Naive thymus-derived CD4-positive, alpha-beta T cell (primary cell): ENCODE measurements at regions of chr11 and their contacts with region 1.

Region 1: GRCh38 chr11:35073691-35074419 is 65.1 kb upstream of the CD44 start:
- DNase-seq: no peak
- ATAC-seq: no peak
- H3K4me3 ChIP-seq: no peak overlapping the region
- H3K4me3 Mint-ChIP-seq: no peak overlapping the region
- H3K27ac ChIP-seq: no peak overlapping the region
- H3K27ac Mint-ChIP-seq: peak overlapping the region in 7 of 9 donors; percentile 48 to 82 (median 65)
- H3K4me1 ChIP-seq: peaks cover 33 to 44% of the 10 kb centered on the region in 2 donors
- H3K4me1 Mint-ChIP-seq: peaks cover 40 to 82% (median 66%) of the 10 kb centered on the region in 7 donors
- H3K27me3 ChIP-seq: no peaks in the 10 kb centered on the region
- H3K27me3 Mint-ChIP-seq: no peaks in the 10 kb centered on the region

Region 2: DNA sequence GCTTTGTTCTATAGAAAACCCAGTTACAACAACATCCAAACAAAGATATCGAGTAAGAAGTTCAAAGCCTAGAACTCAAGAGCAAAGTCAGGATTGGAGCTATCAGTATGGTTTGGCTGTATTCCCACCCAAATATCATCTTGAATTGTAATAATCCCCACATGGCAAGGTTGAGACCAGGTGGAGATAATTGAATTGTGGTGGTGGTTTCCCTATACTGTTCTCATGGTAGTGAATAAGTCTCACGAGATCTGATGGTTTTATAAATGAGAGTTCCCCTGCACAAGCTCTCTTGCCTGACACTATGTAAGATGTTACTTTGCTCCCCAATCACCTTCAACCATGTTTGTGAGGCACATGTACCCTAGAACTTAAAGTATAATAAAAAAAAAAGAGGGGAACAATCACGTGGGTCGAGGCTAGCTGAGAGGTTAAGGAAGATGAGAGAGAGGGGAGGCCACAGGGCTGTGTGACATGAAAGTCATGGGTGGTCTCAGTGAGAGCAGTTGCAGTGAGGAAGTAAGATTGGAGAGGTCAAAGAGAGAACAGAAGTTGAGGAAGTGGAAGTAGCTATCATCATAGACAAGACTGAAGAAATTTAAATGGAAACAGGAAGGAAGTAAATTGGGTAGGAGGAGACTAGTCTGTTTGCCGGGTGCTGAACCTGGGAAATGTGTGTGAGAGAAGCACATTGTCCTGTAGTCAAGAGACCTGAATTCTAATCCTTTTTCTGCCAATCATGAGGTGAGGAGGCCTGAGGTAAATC is 15.0 kb before region 1 on chr11:
- CTCF ChIA-PET with region 1: interaction called, 3 read pairs
- POLR2A ChIA-PET with region 1: interaction called, 11 read pairs
- intact Hi-C with region 1: loop called in 1 of 2 experiments (anchors 2 kb)
- DNase-seq: peak in 2 of 9 donors; percentile 20
- ATAC-seq: peak; percentile 69
- H3K4me3 ChIP-seq: no peak overlapping the region
- H3K4me3 Mint-ChIP-seq: peak overlapping the region; percentile 2 to 75 (median 48)
- H3K27ac ChIP-seq: peak overlapping the region; percentile 41
- H3K27ac Mint-ChIP-seq: peak overlapping the region in 8 of 9 donors; percentile 44 to 93 (median 80)
- H3K4me1 ChIP-seq: peaks cover 19 to 24% of the 10 kb centered on the region in 2 donors
- H3K4me1 Mint-ChIP-seq: peaks cover 27 to 56% (median 44%) of the 10 kb centered on the region in 7 donors
- H3K27me3 ChIP-seq: no peaks in the 10 kb centered on the region
- H3K27me3 Mint-ChIP-seq: no peaks in the 10 kb centered on the region

Region 3: DNA sequence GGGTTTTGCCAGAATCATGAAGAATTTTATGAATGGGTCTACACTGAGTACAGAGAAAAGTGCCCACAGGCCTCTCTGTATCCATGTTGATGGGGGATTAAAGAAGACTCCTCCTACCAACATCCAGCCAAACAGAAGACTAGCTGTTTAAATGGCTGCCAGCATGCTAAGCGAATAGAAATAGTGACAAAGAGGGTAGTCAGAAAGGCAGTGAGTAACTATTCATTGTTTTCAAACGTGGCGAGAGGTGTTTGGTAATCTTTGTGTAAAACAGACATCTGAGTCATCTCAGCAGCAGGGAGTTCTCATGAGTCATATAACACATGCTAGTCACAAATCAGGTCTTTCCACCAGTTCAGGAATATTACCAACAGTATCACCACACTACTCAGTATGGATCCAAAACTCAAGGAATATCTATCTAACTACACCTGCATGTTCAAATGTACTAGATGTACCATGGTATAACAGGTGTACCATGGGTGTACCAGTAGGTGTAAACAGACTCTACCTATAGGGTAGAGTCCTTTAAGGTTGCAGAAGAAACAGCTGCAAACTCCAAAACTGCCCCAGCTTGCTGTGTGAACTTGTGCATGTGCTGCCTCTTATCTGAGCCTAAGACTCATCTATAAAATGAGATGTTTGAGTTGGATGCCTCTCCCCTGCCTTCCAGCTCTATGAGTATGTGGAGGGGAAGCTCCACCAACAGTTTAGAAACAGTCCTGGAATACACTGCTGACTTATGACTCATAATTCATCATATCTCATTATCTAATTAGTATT is 263.5 kb after region 1 on chr11:
- CTCF ChIA-PET with region 1: no interaction called
- POLR2A ChIA-PET with region 1: no interaction called
- intact Hi-C with region 1: no loop called
- DNase-seq: no peak
- ATAC-seq: peak; percentile 70
- H3K4me3 ChIP-seq: no peak overlapping the region
- H3K4me3 Mint-ChIP-seq: no peak overlapping the region
- H3K27ac ChIP-seq: no peak overlapping the region
- H3K27ac Mint-ChIP-seq: no peak overlapping the region
- H3K4me1 ChIP-seq: peaks cover 6 to 14% of the 10 kb centered on the region in 2 donors
- H3K4me1 Mint-ChIP-seq: peaks cover 12 to 40% (median 28%) of the 10 kb centered on the region in 7 donors
- H3K27me3 ChIP-seq: no peaks in the 10 kb centered on the region
- H3K27me3 Mint-ChIP-seq: no peaks in the 10 kb centered on the region